ENCODE measurements at regions of chr11 and their contacts with region 1.

Region 1: DNA sequence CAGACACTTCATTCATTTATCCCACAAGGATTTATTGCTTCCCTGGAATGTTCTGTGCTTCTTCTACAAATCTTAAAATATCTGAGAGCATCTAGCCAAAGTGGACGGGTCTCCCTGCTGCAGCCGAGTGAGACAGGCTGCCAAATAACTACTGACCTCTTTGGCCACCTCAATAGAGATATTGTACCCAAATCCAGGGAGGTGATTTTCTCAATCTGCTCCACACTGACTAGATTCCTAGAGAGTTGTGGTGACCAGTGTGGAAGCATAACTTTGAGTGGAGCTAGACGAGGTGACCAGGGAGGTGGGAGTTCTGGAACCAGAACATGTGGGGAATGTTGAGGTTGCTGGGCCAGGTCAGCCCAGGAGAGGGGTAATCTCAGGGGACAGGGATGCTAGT is 77.5 kb downstream of the THAP12 start:
- DNase-seq: no peak

Region 2: DNA sequence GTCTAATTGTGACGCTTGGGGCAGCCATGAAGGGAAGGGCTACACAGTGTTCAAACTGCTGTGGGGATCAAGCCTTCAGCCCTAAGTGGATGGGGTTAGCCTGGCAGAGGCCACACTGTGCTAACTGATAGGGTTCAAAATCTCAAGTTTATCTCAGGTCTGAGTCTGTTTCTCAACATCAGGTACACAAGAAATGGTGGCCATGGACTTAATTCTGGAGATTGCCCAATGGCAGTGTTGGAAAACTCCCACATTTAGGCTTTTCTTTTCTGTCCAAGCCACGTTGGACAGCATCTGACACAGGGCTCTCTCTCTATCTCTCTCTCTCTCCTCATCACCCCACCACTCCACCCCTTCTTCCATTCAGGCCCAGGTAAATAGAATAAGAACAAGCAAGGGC is 545.7 kb before region 1 on chr11:
- CTCF ChIA-PET with region 1: no interaction called
- POLR2A ChIA-PET with region 1: no interaction called
- DNase-seq: no peak

Region 3: GRCh38 chr11:76293189-76293631 is 10.2 kb before region 1 on chr11:
- CTCF ChIA-PET with region 1: interaction called, 10 read pairs
- POLR2A ChIA-PET with region 1: no interaction called
- DNase-seq: no peak

Region 4: DNA sequence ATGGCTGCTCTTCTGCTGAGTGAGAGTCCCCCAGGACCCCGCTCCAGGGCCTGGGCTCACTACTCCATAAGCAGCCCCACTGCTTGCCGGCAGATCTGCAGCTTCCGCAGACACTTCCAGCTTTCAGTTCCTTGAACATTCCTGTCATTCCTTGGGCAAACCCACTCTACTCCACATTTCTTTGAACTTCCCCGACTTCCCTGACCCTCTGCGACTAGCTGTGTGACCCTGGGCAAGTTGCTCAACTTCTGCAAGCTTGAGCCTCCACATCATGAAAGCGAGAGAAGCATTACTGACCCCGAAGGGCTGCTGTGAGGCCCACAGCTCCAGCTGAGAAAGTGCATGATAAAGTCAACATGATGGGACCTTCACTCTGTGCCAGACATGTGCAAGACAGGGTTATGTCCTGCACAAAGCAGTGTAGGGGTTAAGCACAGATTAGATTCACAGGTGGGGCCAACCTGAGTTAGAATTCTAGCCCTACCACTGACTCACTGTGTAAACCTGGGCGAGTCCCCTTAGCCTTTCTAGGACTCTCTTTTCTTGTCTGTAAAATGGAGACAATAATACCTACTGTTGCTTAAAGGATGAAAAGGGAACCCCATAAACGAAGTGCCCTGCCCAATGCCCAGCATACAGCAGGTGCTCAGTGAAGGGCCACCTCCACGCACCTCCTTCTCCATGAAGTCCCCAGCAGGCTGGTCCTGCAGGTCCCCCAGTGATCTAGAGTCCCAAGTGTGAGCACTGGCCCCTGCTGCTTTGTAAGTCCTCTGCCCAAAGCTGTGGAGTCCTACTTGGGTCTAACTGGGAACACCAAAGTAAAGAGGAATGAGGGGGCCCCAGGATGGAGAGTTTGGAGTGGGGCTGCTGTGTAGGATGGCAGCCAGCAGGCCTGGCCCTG is 25.9 kb after region 1 on chr11:
- CTCF ChIA-PET with region 1: no interaction called
- POLR2A ChIA-PET with region 1: no interaction called
- DNase-seq: no peak